ENCODE measurements at regions of chr21 and their contacts with region 1.

Region 1: GRCh38 chr21:28118570-28118969 is 874.1 kb downstream of the LTN1 start:
- DNase-seq: no peak
- ATAC-seq: no peak
- H3K4me3 ChIP-seq: no peak overlapping the region
- H3K27ac ChIP-seq: no peak overlapping the region
- H3K4me1 ChIP-seq: no peaks in the 10 kb centered on the region
- H3K27me3 ChIP-seq: no peaks in the 10 kb centered on the region
- CTCF ChIP-seq: no peak

Region 2: GRCh38 chr21:27168084-27168483 is 950.5 kb before region 1 on chr21:
- CTCF ChIA-PET with region 1: no interaction called
- POLR2A ChIA-PET with region 1: interaction called, 15 read pairs
- intact Hi-C with region 1: no loop called
- DNase-seq: peak; percentile 2
- ATAC-seq: no peak
- H3K4me3 ChIP-seq: no peak overlapping the region
- H3K27ac ChIP-seq: no peak overlapping the region
- H3K4me1 ChIP-seq: no peaks in the 10 kb centered on the region
- H3K27me3 ChIP-seq: no peaks in the 10 kb centered on the region
- CTCF ChIP-seq: no peak

Region 3: DNA sequence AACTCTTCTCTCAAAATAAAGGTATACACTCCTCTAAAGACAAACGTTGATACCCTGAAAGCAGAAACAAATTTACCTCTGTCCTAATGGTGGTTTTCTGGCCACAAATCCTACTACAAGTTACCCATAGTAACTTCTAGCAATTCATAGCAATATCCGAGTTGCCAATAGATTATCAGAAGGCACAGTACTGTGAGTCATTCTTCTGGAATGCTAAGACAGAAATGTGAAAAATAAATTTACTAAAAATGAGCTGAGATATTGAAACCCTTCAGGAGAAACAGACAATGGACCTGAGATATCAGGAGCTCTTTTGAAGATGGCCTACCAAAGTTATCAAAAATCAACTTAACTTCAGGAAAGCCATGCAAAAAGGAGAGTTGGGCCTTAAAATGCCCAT is 436.7 kb before region 1 on chr21:
- CTCF ChIA-PET with region 1: no interaction called
- POLR2A ChIA-PET with region 1: no interaction called
- intact Hi-C with region 1: no loop called
- DNase-seq: peak; percentile 24
- ATAC-seq: peak; percentile 22; the same call in 1 of the 2 replicates
- H3K4me3 ChIP-seq: no peak overlapping the region
- H3K27ac ChIP-seq: no peak overlapping the region
- H3K4me1 ChIP-seq: no peaks in the 10 kb centered on the region
- H3K27me3 ChIP-seq: no peaks in the 10 kb centered on the region
- CTCF ChIP-seq: no peak

Measured in PC-3 (cell line).